ENCODE measurements at regions of chr2 and their contacts with region 1.

Region 1: DNA sequence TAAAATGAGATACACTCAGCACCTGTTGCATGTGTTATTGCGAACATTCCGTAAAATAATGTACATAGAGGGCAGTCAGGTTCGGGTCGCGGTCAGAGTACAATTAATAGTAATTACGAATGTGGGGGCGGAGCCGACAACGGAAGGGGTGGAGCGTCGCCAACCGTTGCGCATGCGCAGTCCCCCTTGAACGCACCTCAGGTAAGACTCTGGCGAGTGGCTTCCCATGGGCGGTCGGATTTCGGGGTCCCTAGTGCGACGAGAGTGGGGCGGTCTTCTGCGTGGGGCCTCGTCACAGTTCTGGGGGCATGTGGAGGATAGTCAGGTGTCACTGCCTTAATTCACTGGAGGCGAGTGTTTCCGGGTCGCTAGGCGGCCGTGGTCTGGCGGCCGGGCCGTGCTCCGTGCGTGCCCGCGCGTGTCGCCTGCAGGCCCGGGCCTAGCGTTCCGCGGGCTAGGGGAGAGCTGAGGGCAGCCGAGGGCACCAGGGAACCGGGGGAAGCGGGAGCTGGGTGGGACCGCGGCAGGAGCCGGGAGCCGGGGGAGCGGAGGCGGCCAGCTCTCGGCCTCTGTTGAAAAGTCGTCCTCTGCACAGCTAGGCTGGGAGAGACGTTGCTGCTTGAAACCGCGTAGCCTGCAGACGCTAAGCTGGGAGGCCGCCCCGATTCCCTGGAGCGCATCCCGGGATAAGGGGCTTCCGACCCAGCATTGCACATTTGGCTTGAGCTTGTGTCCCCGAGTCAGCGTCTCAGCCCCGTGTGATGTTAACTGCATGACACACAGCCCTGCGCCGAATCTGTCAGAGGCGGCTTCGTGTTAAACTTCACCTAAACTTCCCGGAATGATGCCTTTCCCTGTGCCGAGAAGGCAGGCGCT is at the start of gene CEBPZOS:
- DNase-seq: peak; percentile 43 to 89
- H3K4me3 ChIP-seq: peak within 1 kb of the TSS; percentile 86 to 94
- H3K27ac ChIP-seq: peak within 1 kb of the TSS; percentile 94 to 97
- H3K4me1 ChIP-seq: peaks cover 0 to 5% of the 10 kb centered on the region in 2 donors
- H3K27me3 ChIP-seq: no peaks in the 10 kb centered on the region
- CTCF ChIP-seq: no peak
- total RNA-seq, gene CEBPZOS: 2.9 TPM

Region 2: DNA sequence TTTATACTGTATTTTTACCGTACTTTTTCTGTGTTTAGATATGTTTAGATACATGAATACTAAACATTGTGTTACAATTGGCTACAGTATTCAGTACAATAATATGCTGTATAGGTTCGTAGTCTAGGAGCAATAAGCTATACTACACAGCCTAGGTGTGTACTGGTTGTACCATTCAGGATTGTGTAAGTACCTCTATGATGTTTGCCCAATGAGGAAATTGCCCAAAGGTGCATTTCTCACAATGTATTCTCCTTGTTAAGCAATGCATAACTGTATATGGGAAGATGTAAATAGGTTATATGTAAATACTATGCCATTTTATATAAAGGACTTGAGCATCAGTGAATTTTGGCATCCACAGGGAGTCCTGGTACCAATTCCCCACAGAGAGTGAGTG is 50.5 kb before region 1 on chr2:
- intact Hi-C with region 1: no loop called
- DNase-seq: no peak
- H3K4me3 ChIP-seq: no peak overlapping the region
- H3K27ac ChIP-seq: no peak overlapping the region
- H3K4me1 ChIP-seq: peaks cover 0 to 3% of the 10 kb centered on the region in 2 donors
- H3K27me3 ChIP-seq: no peaks in the 10 kb centered on the region
- CTCF ChIP-seq: no peak

Region 3: GRCh38 chr2:37156857-37157714 is 39.5 kb before region 1 on chr2 and contains the start of gene EIF2AK2:
- intact Hi-C with region 1: loop called (anchors 2 kb)
- DNase-seq: peak; percentile 49 to 90
- H3K4me3 ChIP-seq: peak within 1 kb of the TSS; percentile 86 to 98
- H3K27ac ChIP-seq: peak within 1 kb of the TSS; percentile 77 to 85
- H3K4me1 ChIP-seq: peaks cover 6 to 16% of the 10 kb centered on the region in 2 donors
- H3K27me3 ChIP-seq: no peaks in the 10 kb centered on the region
- CTCF ChIP-seq: no peak
- total RNA-seq, gene EIF2AK2: 10.6 TPM

Region 4: DNA sequence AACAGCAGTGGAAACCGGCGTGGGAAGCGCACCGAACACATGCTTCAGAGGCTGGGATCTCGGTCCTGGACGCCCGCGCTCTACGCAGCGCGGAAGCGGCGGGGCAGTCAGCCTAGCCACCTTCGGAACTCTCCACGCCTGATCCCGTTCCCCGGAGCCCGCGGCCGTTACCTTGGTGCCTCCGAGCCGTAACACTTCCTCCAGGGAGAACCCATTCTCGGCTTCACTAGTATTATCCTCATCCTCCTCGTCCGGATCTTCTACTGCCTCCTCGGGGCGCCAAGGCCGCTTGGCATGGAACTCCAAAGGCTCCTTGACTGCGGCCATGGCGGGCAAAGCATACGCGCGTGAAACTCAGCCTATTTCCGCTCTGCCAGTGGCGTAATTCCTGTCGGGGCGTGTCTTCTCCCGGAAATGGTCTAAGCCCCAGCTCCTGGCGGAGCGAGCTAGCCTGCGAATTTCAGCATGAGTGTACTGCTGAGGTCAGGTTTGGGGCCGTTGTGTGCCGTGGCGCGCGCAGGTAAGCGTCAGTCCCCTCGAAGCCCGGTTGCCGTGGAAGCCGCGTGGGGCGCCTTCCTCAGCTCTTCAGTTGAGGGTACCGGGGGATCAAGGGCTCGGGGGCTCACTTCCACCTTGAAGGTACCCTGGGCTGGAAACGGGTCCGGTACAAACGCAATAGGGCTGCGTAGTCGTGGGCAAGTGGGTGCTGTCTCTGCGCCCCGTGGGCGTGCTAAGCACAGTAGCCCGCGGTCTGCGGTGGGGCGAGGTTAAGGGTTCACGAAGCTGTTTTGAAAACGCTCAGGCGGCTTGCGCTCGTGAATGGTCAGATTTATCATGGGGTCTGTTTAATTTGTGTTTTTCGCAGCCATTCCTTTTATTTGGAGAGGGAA is 34.9 kb after region 1 on chr2 and contains the starts of genes CEBPZ and NDUFAF7:
- intact Hi-C with region 1: loop called (anchors 2 kb)
- DNase-seq: peak; percentile 73 to 96
- H3K4me3 ChIP-seq: peak within 1 kb of the TSS; percentile 87 to 95
- H3K27ac ChIP-seq: peak within 1 kb of the TSS; percentile 81 to 94
- H3K4me1 ChIP-seq: peaks cover 7 to 23% of the 10 kb centered on the region in 2 donors
- H3K27me3 ChIP-seq: no peaks in the 10 kb centered on the region
- CTCF ChIP-seq: no peak
- total RNA-seq, gene CEBPZ: 20.2 TPM
- total RNA-seq, gene NDUFAF7: 3.8 TPM